H1 (cell line): ENCODE measurements at regions of chr3 and their contacts with region 1.

Region 1: DNA sequence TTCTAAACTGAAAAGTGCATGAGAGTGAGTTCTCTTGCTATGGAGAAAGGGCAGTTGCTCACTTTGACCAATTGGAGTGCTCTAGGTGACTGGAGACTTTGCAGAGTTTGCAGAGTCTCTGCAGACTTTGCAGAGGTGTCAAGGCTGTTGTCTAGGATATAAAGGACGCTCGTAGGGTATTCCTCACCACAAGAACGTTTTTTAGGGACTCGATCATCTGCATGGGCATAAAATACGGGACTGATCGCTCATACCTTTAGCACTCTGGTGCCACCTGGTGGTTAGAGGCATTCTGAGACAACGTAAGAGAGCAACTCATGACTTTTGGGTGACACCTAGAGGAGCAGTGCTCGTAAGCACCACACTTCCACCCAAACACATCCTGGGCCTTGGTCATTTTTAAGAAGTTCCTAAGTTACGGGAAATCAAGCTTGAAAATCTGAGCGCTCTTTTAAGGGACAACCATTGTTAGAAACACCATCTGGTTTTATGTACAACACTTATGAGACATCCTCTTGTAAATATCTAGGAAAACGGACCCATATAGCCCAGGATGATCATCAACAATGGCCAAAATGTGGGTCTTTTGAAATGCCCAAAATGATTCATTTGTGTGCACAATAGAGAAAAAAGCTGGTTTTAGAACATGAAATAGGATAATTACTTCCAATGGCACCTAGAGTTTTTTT is 51.6 kb upstream of the XCR1 start:
- DNase-seq: peak; percentile 61 to 91
- H3K4me3 ChIP-seq: no peak overlapping the region
- H3K27ac ChIP-seq: no peak overlapping the region
- H3K4me1 ChIP-seq: no peaks in the 10 kb centered on the region
- H3K27me3 ChIP-seq: no peaks in the 10 kb centered on the region
- CTCF ChIP-seq: peak; percentile 54 to 100 (median 100)
- EP300 ChIP-seq: no peak
- POLR2A ChIP-seq: no peak
- RAD21 ChIP-seq: peak; percentile 98

Region 2: DNA sequence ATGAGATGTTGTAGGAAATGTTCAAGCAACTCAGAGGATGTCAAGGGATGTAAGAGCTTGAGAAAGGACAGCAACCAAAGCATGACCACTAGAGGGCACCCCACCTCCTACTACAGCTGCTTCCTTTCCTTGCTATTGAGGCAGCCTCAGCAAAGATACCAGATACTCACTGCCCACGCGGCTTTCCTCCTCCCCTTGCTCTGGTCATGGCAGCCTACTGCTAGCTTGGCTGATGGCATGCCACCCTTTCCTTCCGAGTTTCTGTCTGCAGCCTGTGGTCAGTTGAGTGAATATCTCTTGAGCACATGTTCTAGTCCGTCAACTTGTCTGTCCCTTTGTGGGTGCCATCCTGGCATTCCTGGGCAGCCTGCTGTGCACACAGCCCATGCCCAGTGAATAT is 140.0 kb before region 1 on chr3:
- CTCF ChIA-PET with region 1: interaction called, 54 read pairs
- POLR2A ChIA-PET with region 1: no interaction called
- DNase-seq: peak; percentile 56 to 86
- H3K4me3 ChIP-seq: no peak overlapping the region
- H3K27ac ChIP-seq: no peak overlapping the region
- H3K4me1 ChIP-seq: peaks cover 0 to 2% (median under 1%) of the 10 kb centered on the region in 4 experiments; a peak in 2 of 7 replicates
- H3K27me3 ChIP-seq: no peaks in the 10 kb centered on the region
- CTCF ChIP-seq: peak; percentile 42 to 98 (median 81)
- EP300 ChIP-seq: no peak
- POLR2A ChIP-seq: no peak
- RAD21 ChIP-seq: peak; percentile 72 to 76

Region 3: DNA sequence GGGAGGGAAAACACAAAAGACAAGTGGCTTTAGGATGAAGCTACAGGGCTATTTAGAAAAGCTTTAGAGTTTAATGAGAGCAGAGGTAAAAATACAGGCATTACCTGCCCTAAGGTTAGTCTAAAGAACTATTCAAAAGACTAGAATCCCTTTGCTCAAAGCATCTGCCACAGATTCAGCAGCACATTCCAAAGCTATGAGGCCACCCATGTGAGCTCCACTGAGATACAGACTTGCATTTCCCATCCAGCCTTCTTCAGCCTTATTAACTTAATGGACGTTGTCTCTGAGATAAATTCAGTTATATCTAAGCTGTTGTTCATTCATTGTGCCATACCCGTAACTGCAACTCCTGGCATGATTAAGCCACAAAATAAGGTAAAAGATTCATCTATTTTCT is 110.2 kb before region 1 on chr3:
- CTCF ChIA-PET with region 1: interaction called, 30 read pairs
- POLR2A ChIA-PET with region 1: no interaction called
- DNase-seq: no peak
- H3K4me3 ChIP-seq: no peak overlapping the region
- H3K27ac ChIP-seq: no peak overlapping the region
- H3K4me1 ChIP-seq: no peaks in the 10 kb centered on the region
- H3K27me3 ChIP-seq: no peaks in the 10 kb centered on the region
- CTCF ChIP-seq: no peak
- EP300 ChIP-seq: no peak
- POLR2A ChIP-seq: no peak
- RAD21 ChIP-seq: no peak

Region 4: DNA sequence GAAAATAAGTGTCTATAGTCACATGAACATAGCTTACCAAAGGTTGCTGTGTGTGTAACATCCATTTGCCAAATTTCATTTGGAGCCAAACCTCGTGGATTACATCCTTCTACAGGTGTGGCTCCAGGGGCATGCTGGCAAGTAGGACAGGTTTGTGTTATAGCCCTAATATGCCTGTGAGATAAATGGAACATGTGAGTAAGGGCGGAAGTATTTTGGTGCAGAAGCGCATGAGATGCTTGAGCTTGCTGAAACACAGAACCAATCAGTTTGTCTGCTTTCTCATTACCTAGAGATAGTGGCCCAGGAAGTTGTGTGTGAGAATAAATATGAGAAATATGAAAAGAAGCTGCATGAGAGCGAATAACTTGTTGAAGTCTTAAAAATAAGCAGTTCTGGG is 29.7 kb before region 1 on chr3:
- CTCF ChIA-PET with region 1: interaction called, 30 read pairs
- POLR2A ChIA-PET with region 1: no interaction called
- DNase-seq: no peak
- H3K4me3 ChIP-seq: no peak overlapping the region
- H3K27ac ChIP-seq: no peak overlapping the region
- H3K4me1 ChIP-seq: no peaks in the 10 kb centered on the region
- H3K27me3 ChIP-seq: no peaks in the 10 kb centered on the region
- CTCF ChIP-seq: no peak
- EP300 ChIP-seq: no peak
- POLR2A ChIP-seq: no peak
- RAD21 ChIP-seq: no peak

Region 5: DNA sequence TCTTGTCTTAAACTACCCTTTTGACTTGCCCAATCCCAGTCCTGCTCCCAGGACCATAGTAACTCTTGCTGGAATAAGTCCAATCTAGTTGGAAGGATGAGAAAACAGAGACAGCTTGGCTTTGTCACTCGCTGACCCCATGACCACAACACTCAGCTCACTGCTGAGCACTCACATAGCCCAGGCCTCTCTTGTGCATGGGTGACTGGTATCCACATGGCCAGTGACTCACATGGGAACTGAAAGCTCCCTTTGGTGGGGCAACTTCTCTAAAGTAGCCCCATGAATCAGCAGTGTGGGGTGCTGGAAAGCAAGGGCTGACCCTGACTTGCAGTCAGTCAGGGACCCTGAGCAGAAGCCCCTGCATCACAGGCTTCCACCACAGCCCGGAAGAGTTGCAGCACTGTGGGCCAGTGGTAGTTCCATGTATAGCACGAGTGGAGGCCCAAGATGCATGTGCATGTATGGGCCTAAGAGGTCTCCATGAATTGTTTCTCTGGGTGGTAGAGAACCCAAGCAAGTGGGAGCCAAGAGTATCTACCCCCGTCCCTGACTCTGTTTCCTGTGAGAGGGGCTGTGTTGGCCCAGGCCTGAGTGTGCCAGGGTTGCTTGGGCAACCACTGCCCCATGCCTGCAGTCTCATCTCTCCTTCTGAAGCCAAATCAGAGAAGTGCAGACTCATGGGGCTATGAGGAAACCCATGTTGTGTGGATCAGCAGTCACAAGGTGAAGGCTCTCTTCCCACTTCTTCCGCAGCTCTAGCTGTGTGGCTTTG is 10.6 kb after region 1 on chr3:
- CTCF ChIA-PET with region 1: interaction called, 60 read pairs
- POLR2A ChIA-PET with region 1: no interaction called
- DNase-seq: no peak
- H3K4me3 ChIP-seq: no peak overlapping the region
- H3K27ac ChIP-seq: no peak overlapping the region
- H3K4me1 ChIP-seq: no peaks in the 10 kb centered on the region
- H3K27me3 ChIP-seq: no peaks in the 10 kb centered on the region; a peak in 1 of 7 replicates
- CTCF ChIP-seq: no peak
- EP300 ChIP-seq: no peak
- POLR2A ChIP-seq: no peak
- RAD21 ChIP-seq: no peak

Region 6: GRCh38 chr3:46163318-46164041 is 84.6 kb after region 1 on chr3:
- CTCF ChIA-PET with region 1: interaction called, 12 read pairs
- POLR2A ChIA-PET with region 1: interaction called, 3 read pairs
- DNase-seq: no peak
- H3K4me3 ChIP-seq: no peak overlapping the region
- H3K27ac ChIP-seq: no peak overlapping the region
- H3K4me1 ChIP-seq: peaks cover 0 to 2% (median 0%) of the 10 kb centered on the region in 4 experiments; a peak in 1 of 7 replicates
- H3K27me3 ChIP-seq: no peaks in the 10 kb centered on the region
- CTCF ChIP-seq: no peak
- EP300 ChIP-seq: no peak
- POLR2A ChIP-seq: no peak
- RAD21 ChIP-seq: no peak

Region 7: DNA sequence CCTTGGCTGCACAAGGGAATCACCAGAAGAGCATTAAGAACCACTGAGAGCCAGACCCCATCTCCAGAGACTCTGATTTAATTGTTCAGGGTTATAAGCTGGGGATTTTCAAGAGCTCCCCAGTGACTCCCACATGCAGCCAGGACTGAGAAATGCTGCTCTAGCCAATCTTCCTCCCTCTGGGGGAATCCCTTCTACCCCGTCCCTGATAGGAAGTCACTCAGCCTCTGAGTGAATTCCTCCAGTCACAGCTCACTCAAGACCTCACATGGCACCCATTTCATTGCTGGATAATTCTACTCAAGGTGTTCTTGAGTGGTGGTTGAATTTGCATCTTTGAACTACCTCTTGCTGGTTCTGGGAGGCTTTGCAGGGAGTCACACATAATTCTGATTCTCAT is 174.1 kb after region 1 on chr3:
- CTCF ChIA-PET with region 1: no interaction called
- POLR2A ChIA-PET with region 1: no interaction called
- DNase-seq: no peak
- H3K4me3 ChIP-seq: no peak overlapping the region
- H3K27ac ChIP-seq: no peak overlapping the region
- H3K4me1 ChIP-seq: no peaks in the 10 kb centered on the region
- H3K27me3 ChIP-seq: no peaks in the 10 kb centered on the region
- CTCF ChIP-seq: no peak
- EP300 ChIP-seq: no peak
- POLR2A ChIP-seq: no peak
- RAD21 ChIP-seq: no peak